Caco-2 (cell line): ENCODE measurements at regions of chr2 and their contacts with region 1.

Region 1: GRCh38 chr2:112048887-112049286 is 6.2 kb upstream of the TMEM87B start:
- DNase-seq: peak in 1 of 2 experiments; percentile 51
- H3K4me3 ChIP-seq: no peak overlapping the region
- H3K4me3 Mint-ChIP-seq: no peak overlapping the region
- H3K27ac Mint-ChIP-seq: no peak overlapping the region
- H3K4me1 ChIP-seq: peaks cover 26% of the 10 kb centered on the region
- H3K4me1 Mint-ChIP-seq: peaks cover 21% of the 10 kb centered on the region
- H3K27me3 ChIP-seq: no peaks in the 10 kb centered on the region
- H3K27me3 Mint-ChIP-seq: no peaks in the 10 kb centered on the region
- CTCF ChIP-seq: peak; percentile 71 to 81

Region 2: GRCh38 chr2:111930875-111931274 is 118.0 kb before region 1 on chr2:
- CTCF ChIA-PET with region 1: no interaction called
- POLR2A ChIA-PET with region 1: no interaction called
- intact Hi-C with region 1: no loop called
- DNase-seq: no peak
- H3K4me3 ChIP-seq: no peak overlapping the region
- H3K4me3 Mint-ChIP-seq: no peak overlapping the region
- H3K27ac Mint-ChIP-seq: no peak overlapping the region
- H3K4me1 ChIP-seq: peaks cover 26% of the 10 kb centered on the region
- H3K4me1 Mint-ChIP-seq: peaks cover 15% of the 10 kb centered on the region
- H3K27me3 ChIP-seq: no peaks in the 10 kb centered on the region
- H3K27me3 Mint-ChIP-seq: no peaks in the 10 kb centered on the region
- CTCF ChIP-seq: no peak

Region 3: DNA sequence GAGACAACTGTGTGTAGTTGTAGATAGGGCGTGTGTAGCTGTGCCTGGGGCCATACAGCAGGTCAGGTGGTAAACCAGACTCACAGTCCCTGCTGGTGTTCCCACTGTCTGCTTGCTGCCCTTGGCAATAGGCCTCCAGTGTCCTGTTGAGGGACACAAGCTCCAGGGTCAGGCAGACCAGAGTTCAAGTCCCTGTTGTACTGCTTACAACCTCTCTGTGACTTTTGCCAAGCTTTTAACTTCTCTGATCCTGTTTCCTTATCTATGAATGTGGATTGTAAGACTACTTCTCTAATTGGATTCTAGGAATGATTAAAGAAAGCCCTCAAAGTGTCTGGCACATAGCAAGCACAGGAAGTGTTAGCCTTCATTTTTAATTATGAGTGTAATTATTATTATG is 81.9 kb before region 1 on chr2:
- CTCF ChIA-PET with region 1: no interaction called
- POLR2A ChIA-PET with region 1: no interaction called
- intact Hi-C with region 1: no loop called
- DNase-seq: no peak
- H3K4me3 ChIP-seq: no peak overlapping the region
- H3K4me3 Mint-ChIP-seq: no peak overlapping the region
- H3K27ac Mint-ChIP-seq: peak overlapping the region; percentile 12
- H3K4me1 ChIP-seq: peaks cover 11% of the 10 kb centered on the region
- H3K4me1 Mint-ChIP-seq: peaks cover 18% of the 10 kb centered on the region
- H3K27me3 ChIP-seq: no peaks in the 10 kb centered on the region
- H3K27me3 Mint-ChIP-seq: no peaks in the 10 kb centered on the region
- CTCF ChIP-seq: no peak

Region 4: DNA sequence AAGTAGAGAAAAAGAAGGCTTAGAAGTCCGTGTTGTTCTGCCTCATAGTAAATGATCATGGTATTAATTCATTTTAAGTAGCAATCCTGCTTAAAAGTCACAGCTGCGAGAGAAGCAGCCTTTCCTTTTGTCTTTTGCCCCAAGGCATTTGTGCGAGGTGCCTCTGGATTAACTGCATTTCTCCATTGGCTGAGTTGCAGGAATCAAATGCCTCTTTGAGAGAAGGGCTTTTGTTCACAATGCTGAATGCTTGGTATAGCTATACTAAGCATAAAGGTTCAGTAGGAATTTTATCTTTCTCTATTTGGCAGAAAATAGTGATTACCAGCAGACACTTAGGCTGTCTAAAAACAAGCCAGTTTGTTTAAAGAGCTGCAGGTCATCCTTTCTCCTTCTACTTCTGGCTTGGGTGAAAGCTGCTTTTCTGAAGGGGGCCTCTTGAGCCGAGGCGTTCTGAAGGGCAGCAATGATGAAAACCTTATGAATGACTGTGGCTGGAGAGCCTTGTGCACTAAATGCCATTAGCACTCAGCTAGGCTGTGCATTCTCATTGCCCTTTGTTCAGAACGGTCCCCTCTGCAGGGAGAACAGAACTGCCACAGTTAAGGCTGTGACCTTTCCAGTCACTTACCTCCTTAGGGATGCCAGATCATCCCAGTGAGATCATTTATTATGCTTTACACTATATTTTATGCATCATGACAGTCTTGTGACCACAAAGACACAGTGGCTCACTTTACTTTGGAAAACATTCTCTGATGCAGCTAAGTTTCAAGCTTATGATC is 62.6 kb before region 1 on chr2:
- CTCF ChIA-PET with region 1: no interaction called
- POLR2A ChIA-PET with region 1: no interaction called
- intact Hi-C with region 1: loop called (anchors 1 kb)
- DNase-seq: peak in 1 of 2 experiments; percentile 18
- H3K4me3 ChIP-seq: no peak overlapping the region
- H3K4me3 Mint-ChIP-seq: peak overlapping the region; percentile 19
- H3K27ac Mint-ChIP-seq: peak overlapping the region; percentile 55
- H3K4me1 ChIP-seq: peaks cover 61% of the 10 kb centered on the region
- H3K4me1 Mint-ChIP-seq: peaks cover 62% of the 10 kb centered on the region
- H3K27me3 ChIP-seq: no peaks in the 10 kb centered on the region
- H3K27me3 Mint-ChIP-seq: no peaks in the 10 kb centered on the region
- CTCF ChIP-seq: no peak

Region 5: GRCh38 chr2:112021781-112022231 is 27.1 kb before region 1 on chr2:
- CTCF ChIA-PET with region 1: no interaction called
- POLR2A ChIA-PET with region 1: no interaction called
- intact Hi-C with region 1: loop called (anchors 2 kb)
- DNase-seq: no peak
- H3K4me3 ChIP-seq: no peak overlapping the region
- H3K4me3 Mint-ChIP-seq: no peak overlapping the region
- H3K27ac Mint-ChIP-seq: no peak overlapping the region
- H3K4me1 ChIP-seq: peaks cover 19% of the 10 kb centered on the region
- H3K4me1 Mint-ChIP-seq: peaks cover 32% of the 10 kb centered on the region
- H3K27me3 ChIP-seq: no peaks in the 10 kb centered on the region
- H3K27me3 Mint-ChIP-seq: no peaks in the 10 kb centered on the region
- CTCF ChIP-seq: no peak